PC-3 (cell line): ENCODE measurements at regions of chrX and their contacts with region 1.

Region 1: GRCh38 chrX:105701084-105702055 is 121.0 kb upstream of the NRK start:
- DNase-seq: peak; percentile 62
- ATAC-seq: peak; percentile 65
- H3K4me3 ChIP-seq: no peak overlapping the region
- H3K27ac ChIP-seq: no peak overlapping the region
- H3K4me1 ChIP-seq: peaks cover 24% of the 10 kb centered on the region
- H3K27me3 ChIP-seq: no peaks in the 10 kb centered on the region
- CTCF ChIP-seq: peak; percentile 75

Region 2: GRCh38 chrX:105314466-105314865 is 386.9 kb before region 1 on chrX:
- CTCF ChIA-PET with region 1: no interaction called
- POLR2A ChIA-PET with region 1: no interaction called
- intact Hi-C with region 1: loop called (anchors 2 kb)
- DNase-seq: peak; percentile 91
- ATAC-seq: peak; percentile 92
- H3K4me3 ChIP-seq: peak overlapping the region; percentile 61
- H3K27ac ChIP-seq: peak overlapping the region; percentile 95
- H3K4me1 ChIP-seq: peaks cover 36% of the 10 kb centered on the region
- H3K27me3 ChIP-seq: no peaks in the 10 kb centered on the region
- CTCF ChIP-seq: no peak

Region 3: DNA sequence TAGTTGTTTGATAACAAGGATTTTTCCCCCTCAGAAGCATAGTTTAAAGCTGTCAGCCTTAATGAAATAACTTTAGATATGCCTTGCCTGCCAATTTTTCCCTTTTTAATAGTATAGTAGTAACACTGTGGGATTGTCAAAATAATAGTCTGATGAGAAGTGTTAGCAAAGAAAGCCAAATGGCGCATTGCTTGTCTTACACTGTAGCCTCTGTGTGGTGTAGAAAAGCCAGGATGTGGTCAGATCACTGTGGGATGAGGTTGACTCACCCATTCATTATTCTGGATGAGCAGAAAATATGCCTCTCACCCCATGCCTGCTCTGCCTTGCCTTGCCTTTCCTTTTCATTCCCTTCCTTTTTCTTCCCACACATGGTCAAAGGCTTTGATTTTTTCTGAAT is 136.9 kb before region 1 on chrX:
- CTCF ChIA-PET with region 1: no interaction called
- POLR2A ChIA-PET with region 1: no interaction called
- intact Hi-C with region 1: loop called (anchors 1 kb)
- DNase-seq: peak; percentile 84
- ATAC-seq: peak; percentile 99
- H3K4me3 ChIP-seq: no peak overlapping the region
- H3K27ac ChIP-seq: peak overlapping the region; percentile 77
- H3K4me1 ChIP-seq: peaks cover 15% of the 10 kb centered on the region
- H3K27me3 ChIP-seq: no peaks in the 10 kb centered on the region
- CTCF ChIP-seq: no peak

Region 4: GRCh38 chrX:105745863-105746262 is 44.5 kb after region 1 on chrX:
- CTCF ChIA-PET with region 1: no interaction called
- POLR2A ChIA-PET with region 1: no interaction called
- intact Hi-C with region 1: no loop called
- DNase-seq: peak; percentile 79
- ATAC-seq: peak; percentile 52; the same call in 1 of the 2 replicates
- H3K4me3 ChIP-seq: no peak overlapping the region
- H3K27ac ChIP-seq: no peak overlapping the region
- H3K4me1 ChIP-seq: peaks cover 33% of the 10 kb centered on the region
- H3K27me3 ChIP-seq: no peaks in the 10 kb centered on the region
- CTCF ChIP-seq: no peak

Region 5: DNA sequence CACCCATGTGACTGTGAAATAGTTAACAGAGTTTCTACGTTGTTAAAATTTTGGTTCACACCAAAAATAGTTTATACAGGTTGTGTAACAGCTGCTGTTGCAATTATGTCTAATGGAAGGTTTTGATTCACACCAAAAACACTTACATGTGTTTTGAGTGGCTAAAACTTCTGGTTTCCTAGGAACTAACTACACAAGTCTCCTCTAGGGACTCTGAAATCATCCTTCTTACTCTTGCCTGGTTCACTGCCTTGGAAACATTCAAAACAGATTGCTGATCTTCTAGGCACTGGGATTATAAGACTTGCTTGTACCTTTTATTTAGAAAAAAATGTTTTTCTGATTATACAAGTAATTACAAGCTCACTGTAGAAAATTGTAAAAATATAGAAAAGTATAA is 1313.6 kb after region 1 on chrX:
- CTCF ChIA-PET with region 1: no interaction called
- POLR2A ChIA-PET with region 1: no interaction called
- intact Hi-C with region 1: no loop called
- DNase-seq: no peak
- ATAC-seq: no peak
- H3K4me3 ChIP-seq: no peak overlapping the region
- H3K27ac ChIP-seq: no peak overlapping the region
- H3K4me1 ChIP-seq: no peaks in the 10 kb centered on the region
- H3K27me3 ChIP-seq: no peaks in the 10 kb centered on the region
- CTCF ChIP-seq: no peak